ENCODE measurements at regions of chr6 and their contacts with region 1.

Region 1: DNA sequence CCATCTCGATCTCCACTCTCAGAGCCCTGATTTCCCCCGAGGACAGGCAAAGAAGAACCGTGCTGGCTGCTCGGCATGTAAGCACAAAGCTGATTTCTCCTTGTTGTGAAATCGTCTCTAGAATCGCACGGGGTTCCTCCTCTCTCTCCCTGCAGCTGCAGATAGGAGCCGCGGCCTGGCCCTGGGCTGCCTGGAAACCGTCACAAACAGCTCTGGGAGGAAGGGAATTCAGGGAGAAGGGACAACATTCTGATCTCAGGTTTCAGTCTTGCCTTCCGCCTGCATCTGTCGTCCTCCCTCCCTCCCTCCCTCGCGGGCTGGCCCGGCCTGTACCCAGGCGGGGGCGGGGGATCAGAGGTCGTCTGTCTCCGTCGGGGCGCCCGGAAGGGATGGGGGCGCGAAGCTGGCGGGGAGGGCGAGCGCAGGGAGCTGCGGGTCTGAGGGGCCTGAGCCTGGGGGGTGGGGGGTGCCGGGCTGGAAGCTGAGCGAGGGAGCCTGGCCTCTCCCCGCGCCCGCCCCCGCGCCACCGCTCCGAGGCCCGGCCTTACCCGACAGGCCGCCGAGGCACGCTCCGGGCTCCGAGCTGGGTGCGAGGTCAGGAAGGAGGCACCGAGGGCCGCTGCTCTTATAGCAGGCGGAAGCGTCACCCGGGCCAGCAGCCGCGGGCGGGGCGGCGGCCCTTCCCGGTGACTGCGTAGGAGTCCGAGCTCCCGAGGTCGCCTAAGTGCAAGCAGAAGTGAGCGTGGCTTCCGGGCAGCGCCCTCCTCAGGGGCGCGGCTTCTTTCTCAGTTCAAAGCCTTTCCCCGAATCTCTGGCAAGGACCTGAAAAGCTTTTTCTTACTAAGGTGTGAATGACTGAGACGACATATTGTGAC is at the start of gene SERPINB1:
- DNase-seq: peak; percentile 83 to 97
- H3K4me3 ChIP-seq: peak within 1 kb of the TSS; percentile 51
- CTCF ChIP-seq: no peak
- POLR2A ChIP-seq: no peak
- total RNA-seq, gene SERPINB1: 12.6 to 41.1 (median 17.6) TPM

Region 2: DNA sequence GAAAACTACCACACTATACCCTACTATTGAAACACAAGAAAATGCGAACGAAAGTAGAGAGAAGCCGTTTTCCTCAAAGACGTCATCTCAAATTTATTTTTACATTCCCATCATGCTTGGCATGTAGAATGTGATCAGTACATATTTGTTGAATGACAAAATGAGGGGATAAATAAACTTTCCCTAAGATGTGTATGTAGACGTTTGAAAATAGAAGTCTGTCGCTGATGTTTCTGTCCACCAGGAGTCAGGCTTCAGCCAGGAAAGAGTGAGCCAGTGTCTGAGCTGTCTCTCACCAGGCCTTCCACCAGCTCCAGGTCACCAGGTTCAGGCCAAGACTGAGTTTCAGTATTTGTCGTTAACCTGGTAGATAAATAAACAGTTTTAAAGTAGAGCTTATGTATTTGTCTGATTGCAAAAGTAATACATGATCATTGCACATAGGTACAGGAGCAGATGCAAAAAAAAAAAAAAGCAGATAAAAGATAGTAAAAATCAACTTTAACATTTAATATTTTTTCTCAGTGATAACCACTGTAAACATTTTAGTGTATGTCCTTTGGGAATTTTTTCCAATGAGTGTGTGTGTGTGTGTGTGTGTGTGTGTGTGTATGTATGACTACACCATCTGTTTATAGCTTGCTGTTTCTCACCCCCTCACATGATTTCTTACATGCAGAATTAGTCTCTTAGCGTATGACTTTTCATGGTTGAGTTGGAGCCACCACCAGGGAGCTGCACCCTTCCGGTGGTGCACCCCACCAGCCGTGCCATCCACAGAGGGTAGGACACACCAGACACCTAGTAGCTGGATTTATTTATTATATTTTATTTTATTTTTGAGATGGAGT is 50.2 kb before region 1 on chr6:
- intact Hi-C with region 1: loop called (anchors 5 kb)
- DNase-seq: peak in 1 of 2 donors; percentile 56
- H3K4me3 ChIP-seq: no peak overlapping the region
- CTCF ChIP-seq: peak in 1 of 3 donors; percentile 32
- POLR2A ChIP-seq: no peak

Region 3: DNA sequence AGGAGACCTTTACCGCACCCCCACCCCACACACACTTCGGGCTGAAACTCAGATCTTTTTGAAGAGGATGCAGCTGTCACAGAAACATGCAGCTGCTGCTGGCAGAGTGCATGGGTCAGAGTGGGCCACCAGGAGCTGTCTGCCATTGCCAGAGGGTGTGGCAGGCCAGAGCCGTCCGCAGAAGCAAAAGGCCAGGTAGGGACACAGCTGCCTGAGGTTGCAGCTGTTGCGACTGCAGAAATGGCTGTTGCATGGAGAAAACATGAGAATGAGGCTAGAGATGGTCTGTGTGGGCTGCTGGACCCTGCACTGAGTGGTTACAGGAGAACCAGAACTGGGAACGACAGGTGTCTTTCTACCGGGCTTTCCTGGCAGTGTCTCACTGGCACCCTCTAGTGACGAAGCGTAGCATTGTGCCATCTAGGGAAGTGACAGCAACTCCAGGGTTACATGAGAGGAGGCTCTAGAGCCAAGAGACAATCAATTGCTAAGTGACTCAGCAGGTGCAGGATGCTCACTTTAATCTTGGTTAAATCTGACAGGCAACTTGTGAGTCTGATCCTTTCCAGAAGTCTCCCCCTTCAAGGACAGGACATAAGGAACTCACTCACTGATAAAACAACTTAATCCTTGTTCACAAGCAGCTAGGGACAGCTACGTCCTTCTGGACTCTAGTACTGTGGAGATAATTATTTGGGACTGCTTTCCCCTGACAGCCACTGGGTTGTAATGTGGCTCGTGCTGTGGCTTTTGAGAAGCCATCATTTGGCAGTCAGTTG is 90.7 kb after region 1 on chr6:
- intact Hi-C with region 1: loop called (anchors 10 kb)
- DNase-seq: peak; percentile 80 to 95
- H3K4me3 ChIP-seq: no peak overlapping the region
- CTCF ChIP-seq: peak in 1 of 3 donors; percentile 79
- POLR2A ChIP-seq: no peak

Region 4: GRCh38 chr6:2976571-2977085 is 135.1 kb after region 1 on chr6:
- intact Hi-C with region 1: no loop called
- DNase-seq: no peak
- H3K4me3 ChIP-seq: no peak overlapping the region
- CTCF ChIP-seq: no peak
- POLR2A ChIP-seq: no peak

Region 5: DNA sequence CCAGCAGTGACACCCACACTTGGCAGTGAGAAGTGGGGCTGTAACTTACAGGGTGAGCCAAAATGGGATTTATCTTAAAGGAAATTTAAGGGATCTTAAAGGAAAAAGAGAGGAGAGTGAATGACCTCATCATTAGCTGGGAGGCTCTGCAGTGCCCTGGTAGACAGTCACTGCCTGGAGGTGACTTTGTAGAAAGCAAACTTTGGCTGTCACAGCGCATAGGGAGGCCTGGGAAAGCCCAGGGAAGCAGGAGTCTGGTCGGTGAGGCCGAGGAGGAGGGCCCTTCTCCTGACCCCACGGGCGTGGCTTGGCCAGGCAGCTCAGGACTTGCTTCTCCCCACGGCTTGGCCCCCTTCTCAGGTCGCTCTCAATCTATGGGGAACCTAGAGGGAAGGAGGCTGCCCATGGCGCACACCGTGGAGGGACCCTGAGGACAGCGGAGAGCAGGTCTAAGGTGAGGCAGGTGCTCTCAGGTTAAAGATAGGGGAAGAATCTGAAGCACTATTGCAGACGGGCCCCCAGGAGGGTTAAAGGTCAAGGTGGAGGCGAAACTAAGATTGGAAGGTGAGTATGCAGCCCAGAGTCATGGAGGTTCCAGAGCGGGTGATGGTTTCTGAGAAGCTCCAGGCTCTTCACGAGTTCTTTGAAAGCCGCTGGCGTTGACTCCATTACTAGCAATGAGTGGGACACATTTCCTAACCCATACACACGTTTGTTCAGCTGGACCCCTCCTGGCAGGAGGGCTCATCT is 211.2 kb after region 1 on chr6:
- intact Hi-C with region 1: loop called (anchors 10 kb)
- DNase-seq: no peak
- H3K4me3 ChIP-seq: no peak overlapping the region
- CTCF ChIP-seq: no peak
- POLR2A ChIP-seq: no peak

Measured in lower leg skin (tissue), 4 donors.